ENCODE measurements at regions of chr19 and their contacts with region 1.

Region 1: DNA sequence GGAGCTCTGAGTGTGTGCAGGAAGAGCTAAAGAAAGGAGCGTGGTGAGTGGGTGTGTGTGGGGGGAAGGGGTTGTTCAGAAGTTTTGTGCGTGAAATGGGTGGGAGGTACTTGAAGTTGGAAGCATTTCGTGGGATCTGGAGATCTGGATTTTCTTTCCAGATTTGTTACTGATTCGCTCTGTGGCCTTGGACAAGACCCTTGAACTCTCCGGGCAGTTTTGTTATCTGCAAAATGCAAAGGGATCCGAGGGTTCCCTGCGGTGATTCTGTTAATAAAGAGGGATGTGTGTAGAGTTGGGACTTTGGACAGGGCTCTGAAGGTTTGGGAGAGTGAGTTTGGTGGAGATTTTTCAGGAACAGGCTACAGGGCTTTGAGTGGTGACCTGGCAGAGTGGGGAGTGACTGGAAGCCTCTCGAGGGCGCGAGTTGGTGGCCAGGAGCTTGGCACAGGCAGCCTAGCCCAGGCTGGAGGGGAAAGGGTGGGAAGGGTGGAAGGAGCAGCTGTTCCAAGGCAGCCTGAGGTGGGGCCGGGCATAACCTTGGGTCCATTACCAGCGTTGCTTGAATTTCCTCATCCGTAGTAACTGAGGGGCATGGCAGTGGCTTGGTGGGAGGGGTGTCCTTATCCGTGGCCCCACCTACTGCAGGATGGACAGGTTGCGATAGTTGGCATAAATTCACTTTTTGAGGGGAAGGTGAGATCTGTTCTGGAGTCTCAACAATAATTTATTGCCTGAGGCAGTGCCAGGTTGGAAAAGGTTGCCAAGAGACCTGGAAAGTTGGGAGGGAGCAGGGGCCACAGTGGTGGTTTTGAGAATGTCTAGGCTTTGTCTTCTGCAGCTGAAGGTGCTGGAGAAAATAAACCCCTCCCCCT is 2.1 kb downstream of the ACTN4 start:
- DNase-seq: no peak
- ATAC-seq: peak; percentile 5

Region 2: DNA sequence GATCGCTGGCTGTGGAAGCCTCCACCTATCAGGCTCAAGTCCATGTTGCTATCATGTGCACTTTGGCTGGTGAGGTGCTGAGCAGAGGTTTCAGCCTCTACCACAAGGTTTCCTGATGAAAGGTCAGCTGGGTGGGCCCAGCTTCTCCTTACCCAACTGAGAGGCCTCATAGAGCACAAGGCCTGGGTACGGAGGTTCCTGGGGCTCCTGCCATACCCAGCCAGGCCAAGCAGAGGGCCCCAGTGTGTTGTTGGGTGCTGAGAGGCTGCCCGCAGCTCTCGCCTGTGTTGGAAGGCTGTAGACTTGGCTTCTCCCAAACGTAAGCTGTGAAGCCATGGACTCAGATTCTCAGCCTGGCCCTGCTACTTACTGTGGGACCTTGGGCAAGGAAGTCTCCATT is 26.1 kb after region 1 on chr19:
- intact Hi-C with region 1: loop called (anchors 2 kb)
- DNase-seq: peak; percentile 32
- ATAC-seq: peak; percentile 1